CD8-positive, alpha-beta T cell (primary cell): ENCODE measurements at regions of chr3 and their contacts with region 1.

Region 1: GRCh38 chr3:128617557-128618397 is 32.8 kb downstream of the RPN1 start:
- DNase-seq: peak; percentile 97 to 100 (median 99)
- ATAC-seq: peak; percentile 95
- H3K4me3 ChIP-seq: peak overlapping the region; percentile 70 to 85
- H3K4me3 Mint-ChIP-seq: peak overlapping the region; percentile 93
- H3K27ac ChIP-seq: peak overlapping the region; percentile 78 to 88
- H3K27ac Mint-ChIP-seq: peak overlapping the region; percentile 96
- H3K4me1 ChIP-seq: peaks cover 16% of the 10 kb centered on the region
- H3K4me1 Mint-ChIP-seq: peaks cover 28% of the 10 kb centered on the region
- H3K27me3 ChIP-seq: no peaks in the 10 kb centered on the region
- H3K27me3 Mint-ChIP-seq: no peaks in the 10 kb centered on the region
- CTCF ChIP-seq: peak; percentile 92

Region 2: DNA sequence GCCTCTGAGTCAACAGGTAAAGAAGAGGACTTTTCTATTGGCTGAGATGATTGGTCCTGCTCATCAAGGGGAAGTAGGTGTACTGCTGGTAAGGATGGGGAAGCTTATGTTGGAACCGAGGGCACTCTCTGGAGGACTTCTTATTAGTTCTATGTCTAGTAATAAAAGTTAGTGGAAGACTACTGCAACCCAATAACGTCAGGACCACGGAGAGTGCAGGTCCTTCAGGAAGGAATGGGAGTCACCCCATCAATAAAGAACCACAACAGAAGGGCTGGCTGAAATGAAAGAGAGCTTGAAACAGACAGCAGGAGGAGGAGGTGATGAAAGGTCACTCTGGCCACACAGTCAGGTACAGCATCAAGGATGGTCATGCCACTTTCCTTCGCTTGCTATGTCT is 1493.7 kb before region 1 on chr3:
- CTCF ChIA-PET with region 1: no interaction called
- POLR2A ChIA-PET with region 1: no interaction called
- intact Hi-C with region 1: no loop called
- DNase-seq: no peak
- ATAC-seq: no peak
- H3K4me3 ChIP-seq: no peak overlapping the region
- H3K4me3 Mint-ChIP-seq: no peak overlapping the region
- H3K27ac ChIP-seq: no peak overlapping the region
- H3K27ac Mint-ChIP-seq: no peak overlapping the region
- H3K4me1 ChIP-seq: no peaks in the 10 kb centered on the region
- H3K4me1 Mint-ChIP-seq: no peaks in the 10 kb centered on the region
- H3K27me3 ChIP-seq: no peaks in the 10 kb centered on the region
- H3K27me3 Mint-ChIP-seq: peaks cover 13% of the 10 kb centered on the region
- CTCF ChIP-seq: no peak

Region 3: GRCh38 chr3:128123538-128124368 is 494.0 kb before region 1 on chr3 and contains the start of gene RUVBL1:
- CTCF ChIA-PET with region 1: no interaction called
- POLR2A ChIA-PET with region 1: no interaction called
- intact Hi-C with region 1: loop called in 1 of 2 experiments (anchors 1 kb)
- DNase-seq: peak; percentile 92 to 99 (median 96)
- ATAC-seq: peak; percentile 92
- H3K4me3 ChIP-seq: peak within 1 kb of the TSS; percentile 82 to 90
- H3K4me3 Mint-ChIP-seq: peak within 1 kb of the TSS; percentile 98
- H3K27ac ChIP-seq: peak within 1 kb of the TSS; percentile 86 to 96
- H3K27ac Mint-ChIP-seq: peak within 1 kb of the TSS; percentile 98
- H3K4me1 ChIP-seq: peaks cover 19% of the 10 kb centered on the region
- H3K4me1 Mint-ChIP-seq: peaks cover 27% of the 10 kb centered on the region
- H3K27me3 ChIP-seq: no peaks in the 10 kb centered on the region
- H3K27me3 Mint-ChIP-seq: no peaks in the 10 kb centered on the region
- CTCF ChIP-seq: no peak
- total RNA-seq, gene RUVBL1: 5.1 to 5.6 TPM

Region 4: DNA sequence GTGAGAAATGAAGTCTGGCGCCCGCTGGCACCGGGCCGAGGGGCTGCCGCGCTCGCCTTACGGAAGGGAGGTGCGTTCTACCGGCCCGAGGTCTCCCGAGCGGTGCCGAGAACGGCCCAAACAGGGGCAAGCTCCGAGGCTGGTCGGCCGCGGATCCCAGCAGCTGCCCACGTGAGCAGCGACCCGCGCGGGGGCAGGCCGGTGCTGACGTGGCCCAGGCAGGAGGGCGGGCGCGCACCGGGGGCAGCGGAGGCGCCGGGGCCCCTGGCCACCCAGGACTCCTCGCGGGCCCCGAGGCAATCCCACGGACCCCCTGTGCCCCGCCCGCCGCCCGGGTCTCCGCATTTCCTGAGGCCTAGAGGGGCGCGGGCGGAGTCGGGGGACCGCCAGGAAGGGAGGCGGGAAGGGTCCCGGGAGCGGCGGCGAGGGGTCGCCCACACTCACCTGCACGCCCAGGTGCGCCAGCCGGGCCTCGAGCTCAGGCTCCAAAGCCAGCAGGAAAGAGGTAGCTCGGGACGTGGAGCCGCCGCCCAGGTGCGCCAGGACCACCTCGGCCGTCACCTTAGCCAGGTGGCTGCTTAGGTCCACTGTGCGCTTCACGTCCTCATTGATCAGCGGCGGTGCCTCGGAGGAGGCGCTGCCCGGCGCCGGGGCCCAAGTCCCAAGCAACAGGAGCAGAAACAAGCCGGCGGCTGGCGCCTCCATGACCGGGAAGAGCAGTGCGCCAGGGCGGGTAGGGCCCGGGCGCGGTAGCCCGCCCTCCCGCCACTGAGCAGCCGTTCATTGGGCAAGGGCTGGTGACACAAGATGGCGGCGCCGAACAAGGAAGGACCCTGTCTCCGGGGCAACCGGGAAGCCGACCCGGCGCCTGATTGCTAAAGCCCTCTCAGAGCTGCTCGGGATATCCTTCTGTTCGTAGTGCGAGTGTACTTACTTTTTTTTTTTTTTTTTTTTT is 32.6 kb after region 1 on chr3 and contains the start of gene RPN1:
- CTCF ChIA-PET with region 1: interaction called, 23 read pairs
- POLR2A ChIA-PET with region 1: interaction called, 7 read pairs
- intact Hi-C with region 1: loop called (anchors 1 to 2 kb)
- DNase-seq: peak; percentile 90 to 97 (median 95)
- ATAC-seq: peak; percentile 96
- H3K4me3 ChIP-seq: peak within 1 kb of the TSS; percentile 97
- H3K4me3 Mint-ChIP-seq: peak within 1 kb of the TSS; percentile 82
- H3K27ac ChIP-seq: peak within 1 kb of the TSS; percentile 95 to 96
- H3K27ac Mint-ChIP-seq: peak within 1 kb of the TSS; percentile 88
- H3K4me1 ChIP-seq: peaks cover 24% of the 10 kb centered on the region
- H3K4me1 Mint-ChIP-seq: peaks cover 47% of the 10 kb centered on the region
- H3K27me3 ChIP-seq: no peaks in the 10 kb centered on the region
- H3K27me3 Mint-ChIP-seq: no peaks in the 10 kb centered on the region
- CTCF ChIP-seq: no peak
- total RNA-seq, gene RPN1: 65.7 to 76.5 TPM

Region 5: DNA sequence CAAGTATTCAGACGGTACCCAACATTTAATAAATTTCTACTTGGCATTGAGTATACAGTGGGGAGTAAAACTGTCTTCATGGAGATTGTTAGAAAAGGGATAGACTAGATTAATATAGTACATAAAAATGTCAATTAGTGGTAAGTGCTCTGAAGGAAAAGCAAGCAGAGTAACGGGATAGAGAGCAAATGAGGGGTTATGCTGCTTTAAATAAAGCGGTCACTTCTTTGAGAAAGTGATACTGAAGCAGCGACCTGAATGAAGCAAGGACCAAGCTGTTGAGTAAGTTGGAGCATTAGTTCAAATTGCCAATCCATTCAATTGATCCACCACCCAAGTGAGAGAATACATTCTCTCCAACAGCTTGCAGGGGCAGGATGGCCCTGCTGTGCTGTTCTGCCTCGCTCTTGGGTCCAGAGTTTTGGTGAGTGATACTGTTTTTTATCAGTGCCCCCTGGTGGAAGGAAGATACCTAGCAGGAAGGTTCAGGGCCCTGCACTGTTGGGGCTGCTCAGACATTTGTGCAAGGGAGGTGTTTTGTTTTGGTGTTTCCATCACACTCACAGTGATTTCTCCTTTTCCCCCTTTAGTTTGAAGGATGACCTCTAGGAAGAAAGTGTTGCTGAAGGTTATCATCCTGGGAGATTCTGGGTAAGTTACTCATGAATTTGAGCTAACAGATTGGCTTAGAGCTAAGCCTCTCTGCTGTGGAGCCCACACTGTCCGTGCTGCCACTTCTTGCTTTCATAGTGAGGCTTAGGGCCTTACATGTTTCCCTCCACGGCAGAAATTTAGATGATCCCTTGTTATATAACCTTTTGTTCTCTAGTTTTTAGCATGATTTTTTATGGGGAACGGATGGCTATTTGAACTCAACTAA is 177.2 kb after region 1 on chr3:
- CTCF ChIA-PET with region 1: interaction called, 11 read pairs
- POLR2A ChIA-PET with region 1: no interaction called
- intact Hi-C with region 1: loop called (anchors 1 kb)
- DNase-seq: peak; percentile 32 to 85 (median 64)
- ATAC-seq: peak; percentile 99
- H3K4me3 ChIP-seq: no peak overlapping the region
- H3K4me3 Mint-ChIP-seq: peak overlapping the region; percentile 9
- H3K27ac ChIP-seq: peak overlapping the region in 1 of 2 experiments; percentile 17
- H3K27ac Mint-ChIP-seq: peak overlapping the region; percentile 80
- H3K4me1 ChIP-seq: peaks cover 44% of the 10 kb centered on the region
- H3K4me1 Mint-ChIP-seq: peaks cover 55% of the 10 kb centered on the region
- H3K27me3 ChIP-seq: no peaks in the 10 kb centered on the region
- H3K27me3 Mint-ChIP-seq: no peaks in the 10 kb centered on the region
- CTCF ChIP-seq: peak; percentile 81

Region 6: DNA sequence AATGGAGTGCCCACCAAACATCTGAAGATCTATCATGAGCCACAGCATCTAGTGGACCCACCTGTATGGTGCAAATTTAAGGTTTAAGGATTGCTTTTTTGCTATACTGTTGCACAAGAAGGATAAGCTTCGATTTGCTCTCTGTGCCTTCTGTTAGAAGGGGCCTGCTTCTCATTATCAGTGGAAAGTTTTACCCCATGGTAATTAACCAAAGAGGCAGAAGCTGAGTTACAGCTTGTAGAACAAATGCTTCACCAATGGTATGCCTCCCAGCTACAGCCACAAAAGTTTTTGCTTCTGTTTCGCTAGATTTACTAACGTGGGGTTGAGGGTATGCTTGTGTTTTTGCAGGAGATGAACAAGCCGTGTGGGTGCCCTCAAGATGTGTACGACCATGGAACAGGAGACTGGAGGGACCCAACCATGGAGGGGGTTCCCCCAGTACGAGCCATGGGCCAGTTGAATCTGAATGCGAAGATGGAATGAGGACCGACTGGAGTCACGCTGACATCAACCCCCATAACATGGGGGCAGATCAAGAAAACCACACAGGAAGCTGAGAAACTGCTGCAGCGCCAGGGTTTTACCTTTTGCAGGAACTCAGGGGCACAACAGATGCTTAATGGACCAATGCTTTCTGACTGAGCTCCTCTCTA is 305.2 kb after region 1 on chr3:
- CTCF ChIA-PET with region 1: interaction called, 3 read pairs
- POLR2A ChIA-PET with region 1: no interaction called
- intact Hi-C with region 1: loop called in 1 of 2 experiments (anchors 1 kb)
- DNase-seq: peak; percentile 16 to 83 (median 58)
- ATAC-seq: peak; percentile 85
- H3K4me3 ChIP-seq: peak overlapping the region; percentile 34 to 37
- H3K4me3 Mint-ChIP-seq: peak overlapping the region; percentile 84
- H3K27ac ChIP-seq: peak overlapping the region; percentile 34 to 52
- H3K27ac Mint-ChIP-seq: peak overlapping the region; percentile 90
- H3K4me1 ChIP-seq: peaks cover 19% of the 10 kb centered on the region
- H3K4me1 Mint-ChIP-seq: peaks cover 36% of the 10 kb centered on the region
- H3K27me3 ChIP-seq: no peaks in the 10 kb centered on the region
- H3K27me3 Mint-ChIP-seq: no peaks in the 10 kb centered on the region
- CTCF ChIP-seq: no peak

Region 7: DNA sequence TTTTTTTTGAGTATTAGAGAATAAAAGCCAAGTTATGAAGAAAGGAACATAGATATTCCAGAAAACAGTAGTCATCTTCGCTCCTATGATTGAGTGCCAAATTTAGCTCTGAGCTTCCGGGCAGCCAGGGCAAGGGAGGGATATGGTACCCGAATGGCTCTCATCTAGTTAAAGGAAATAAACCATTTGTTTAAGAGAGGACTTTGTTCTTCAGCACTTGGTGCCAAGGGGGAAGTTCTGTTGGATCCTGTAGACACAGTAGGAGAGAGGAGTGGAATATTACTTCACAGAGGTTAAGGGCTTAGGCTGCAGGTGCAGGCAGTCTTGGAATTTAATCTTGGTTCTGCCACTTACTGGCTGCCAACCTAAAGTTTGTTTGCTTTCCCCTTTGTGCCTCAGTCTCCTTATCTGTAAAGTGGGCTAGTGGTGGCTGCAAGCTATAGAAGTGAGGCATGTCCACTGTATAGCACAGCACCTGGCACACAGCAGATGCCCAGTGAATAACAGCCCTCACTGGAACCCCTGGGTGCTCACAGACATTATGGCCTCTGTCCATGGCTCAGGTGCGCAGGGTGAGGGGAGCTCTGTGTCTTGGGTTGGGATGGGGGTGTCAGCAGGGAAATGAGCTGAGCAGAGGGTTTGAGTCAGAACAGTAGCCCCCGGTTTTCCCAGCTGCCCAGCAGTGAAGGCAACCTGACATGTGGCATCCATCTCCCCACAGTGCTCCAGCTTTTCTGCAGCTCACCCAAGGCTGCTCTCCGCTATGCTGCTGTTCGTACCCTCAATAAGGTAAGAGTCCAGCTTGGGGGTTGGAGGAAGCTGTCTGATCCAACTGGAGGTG is 642.1 kb after region 1 on chr3:
- CTCF ChIA-PET with region 1: no interaction called
- POLR2A ChIA-PET with region 1: no interaction called
- intact Hi-C with region 1: no loop called
- DNase-seq: no peak
- ATAC-seq: no peak
- H3K4me3 ChIP-seq: no peak overlapping the region
- H3K4me3 Mint-ChIP-seq: no peak overlapping the region
- H3K27ac ChIP-seq: no peak overlapping the region
- H3K27ac Mint-ChIP-seq: no peak overlapping the region
- H3K4me1 ChIP-seq: no peaks in the 10 kb centered on the region
- H3K4me1 Mint-ChIP-seq: peaks cover 1% of the 10 kb centered on the region
- H3K27me3 ChIP-seq: no peaks in the 10 kb centered on the region
- H3K27me3 Mint-ChIP-seq: no peaks in the 10 kb centered on the region
- CTCF ChIP-seq: no peak

Region 8: GRCh38 chr3:129548104-129548503 is 930.3 kb after region 1 on chr3:
- CTCF ChIA-PET with region 1: no interaction called
- POLR2A ChIA-PET with region 1: no interaction called
- intact Hi-C with region 1: no loop called
- DNase-seq: no peak
- ATAC-seq: no peak
- H3K4me3 ChIP-seq: no peak overlapping the region
- H3K4me3 Mint-ChIP-seq: no peak overlapping the region
- H3K27ac ChIP-seq: no peak overlapping the region
- H3K27ac Mint-ChIP-seq: no peak overlapping the region
- H3K4me1 ChIP-seq: no peaks in the 10 kb centered on the region
- H3K4me1 Mint-ChIP-seq: no peaks in the 10 kb centered on the region
- H3K27me3 ChIP-seq: no peaks in the 10 kb centered on the region
- H3K27me3 Mint-ChIP-seq: no peaks in the 10 kb centered on the region
- CTCF ChIP-seq: no peak